ENCODE measurements at regions of chr7 and their contacts with region 1.

Region 1: GRCh38 chr7:39623018-39623731 is at the start of gene RALA:
- DNase-seq: peak; percentile 96
- H3K4me3 ChIP-seq: peak within 1 kb of the TSS; percentile 90
- H3K27ac ChIP-seq: peak within 1 kb of the TSS; percentile 97
- H3K4me1 ChIP-seq: peaks cover 5% of the 10 kb centered on the region
- H3K27me3 ChIP-seq: no peaks in the 10 kb centered on the region
- CTCF ChIP-seq: no peak
- total RNA-seq, gene RALA: 47.8 to 55.6 TPM

Region 2: GRCh38 chr7:39574673-39575349 is 48.4 kb before region 1 on chr7:
- intact Hi-C with region 1: loop called (anchors 5 kb)
- DNase-seq: no peak
- H3K4me3 ChIP-seq: no peak overlapping the region
- H3K27ac ChIP-seq: no peak overlapping the region
- H3K4me1 ChIP-seq: no peaks in the 10 kb centered on the region
- H3K27me3 ChIP-seq: no peaks in the 10 kb centered on the region
- CTCF ChIP-seq: no peak

Region 3: GRCh38 chr7:39732837-39733804 is 109.9 kb after region 1 on chr7:
- intact Hi-C with region 1: loop called (anchors 10 kb)
- DNase-seq: peak; percentile 90
- H3K4me3 ChIP-seq: peak overlapping the region; percentile 46
- H3K27ac ChIP-seq: peak overlapping the region; percentile 38
- H3K4me1 ChIP-seq: no peaks in the 10 kb centered on the region
- H3K27me3 ChIP-seq: no peaks in the 10 kb centered on the region
- CTCF ChIP-seq: no peak

Measured in colonic mucosa (tissue), 4 donors.